ENCODE measurements at regions of chr22 and their contacts with region 1.

Region 1: DNA sequence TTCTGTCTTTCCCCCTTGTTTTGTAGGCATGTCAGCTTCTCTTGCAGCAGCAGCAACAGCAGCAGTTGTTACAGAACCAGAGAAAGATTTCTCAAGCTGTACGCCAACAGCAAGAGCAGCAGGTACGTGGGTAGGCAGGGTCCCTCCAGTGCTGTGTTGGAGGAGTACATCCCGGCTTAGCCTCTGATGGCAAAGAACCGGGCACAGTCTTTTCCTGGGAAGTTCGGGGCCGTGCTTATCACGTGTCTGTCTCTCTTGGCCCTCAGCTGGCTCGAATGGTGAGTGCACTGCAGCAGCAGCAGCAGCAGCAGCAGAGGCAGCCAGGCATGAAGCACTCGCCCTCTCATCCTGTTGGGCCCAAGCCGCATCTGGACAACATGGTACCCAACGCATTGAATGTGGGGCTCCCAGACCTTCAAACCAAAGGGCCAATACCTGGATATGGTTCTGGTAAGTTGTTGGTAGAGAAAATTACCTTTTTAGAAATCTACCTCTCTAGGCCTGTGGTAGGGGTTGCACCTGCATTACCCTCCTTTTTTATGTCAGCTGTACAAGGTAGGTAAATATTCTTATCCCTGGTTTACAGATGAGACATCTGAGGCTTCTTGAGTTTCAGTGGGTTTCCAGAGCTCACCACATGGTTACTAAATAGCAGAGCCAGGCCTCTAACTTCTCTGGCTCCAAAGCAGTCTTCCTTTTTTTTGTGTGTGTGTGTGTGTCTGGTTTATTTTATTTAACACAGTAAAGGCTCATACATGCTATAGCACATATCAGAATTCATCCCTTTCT is 45.2 kb upstream of the ADSL start:
- DNase-seq: peak; percentile 39
- ATAC-seq: peak; percentile 71
- H3K4me3 Mint-ChIP-seq: no peak overlapping the region
- H3K27ac Mint-ChIP-seq: no peak overlapping the region
- H3K4me1 Mint-ChIP-seq: peaks cover 31% of the 10 kb centered on the region
- H3K27me3 Mint-ChIP-seq: no peaks in the 10 kb centered on the region
- CTCF ChIP-seq: no peak

Region 2: GRCh38 chr22:40215266-40215665 is 85.8 kb before region 1 on chr22:
- CTCF ChIA-PET with region 1: no interaction called
- POLR2A ChIA-PET with region 1: no interaction called
- intact Hi-C with region 1: no loop called
- DNase-seq: no peak
- ATAC-seq: no peak
- H3K4me3 Mint-ChIP-seq: peak overlapping the region; percentile 72
- H3K27ac Mint-ChIP-seq: peak overlapping the region; percentile 96
- H3K4me1 Mint-ChIP-seq: peaks cover 89% of the 10 kb centered on the region
- H3K27me3 Mint-ChIP-seq: no peaks in the 10 kb centered on the region
- CTCF ChIP-seq: no peak

Region 3: GRCh38 chr22:40258451-40259046 is 42.5 kb before region 1 on chr22:
- CTCF ChIA-PET with region 1: no interaction called
- POLR2A ChIA-PET with region 1: interaction called, 3 read pairs
- intact Hi-C with region 1: loop called (anchors 10 kb)
- DNase-seq: no peak
- ATAC-seq: peak; percentile 84
- H3K4me3 Mint-ChIP-seq: no peak overlapping the region
- H3K27ac Mint-ChIP-seq: peak overlapping the region; percentile 69
- H3K4me1 Mint-ChIP-seq: peaks cover 41% of the 10 kb centered on the region
- H3K27me3 Mint-ChIP-seq: no peaks in the 10 kb centered on the region
- CTCF ChIP-seq: no peak

Region 4: DNA sequence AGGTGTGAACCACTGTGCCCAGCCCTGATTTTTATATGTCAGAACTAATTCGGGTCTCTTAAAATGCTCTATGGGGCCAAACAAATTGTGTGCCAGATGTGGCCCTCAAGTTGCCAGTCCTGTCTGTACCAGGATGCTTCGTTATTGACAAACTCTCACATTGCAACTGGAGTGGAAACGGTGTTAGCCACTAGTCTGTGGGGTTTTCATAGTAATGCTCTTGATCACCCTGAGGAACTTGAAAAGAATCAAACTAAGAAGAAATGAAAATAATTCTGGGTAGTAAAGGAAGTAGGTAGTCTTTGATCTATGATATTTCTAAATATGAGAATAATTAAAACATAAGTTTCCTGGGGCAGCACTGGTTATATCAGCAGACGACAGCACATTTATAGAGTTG is 22.1 kb before region 1 on chr22:
- CTCF ChIA-PET with region 1: no interaction called
- POLR2A ChIA-PET with region 1: no interaction called
- intact Hi-C with region 1: no loop called
- DNase-seq: peak; percentile 15
- ATAC-seq: peak; percentile 53
- H3K4me3 Mint-ChIP-seq: no peak overlapping the region
- H3K27ac Mint-ChIP-seq: peak overlapping the region; percentile 75
- H3K4me1 Mint-ChIP-seq: peaks cover 48% of the 10 kb centered on the region
- H3K27me3 Mint-ChIP-seq: no peaks in the 10 kb centered on the region
- CTCF ChIP-seq: no peak

Measured in activated CD8-positive, alpha-beta T cell treated with anti-CD3 and anti-CD28 coated beads for 36 hours (primary cell).